ENCODE measurements at regions of chr3 and their contacts with region 1.

Region 1: DNA sequence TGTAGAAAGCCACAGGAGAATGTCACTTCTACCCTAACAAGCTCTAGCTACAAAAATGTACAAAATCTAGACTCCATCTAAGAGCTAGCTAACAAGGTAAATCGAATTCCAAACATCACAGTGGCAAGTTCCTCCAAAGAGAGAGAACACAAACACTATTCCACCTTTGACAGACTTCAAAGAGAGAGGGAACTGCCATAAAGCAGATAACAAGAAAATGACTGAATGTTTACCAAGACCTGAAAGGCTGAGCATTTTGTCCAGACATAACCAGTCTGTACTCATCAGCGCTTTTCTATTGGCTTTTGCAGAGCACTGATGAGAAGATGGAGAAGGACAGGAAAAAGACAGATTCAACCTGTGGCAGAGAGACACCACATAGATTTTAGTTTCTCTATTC is 1419.6 kb upstream of the ALCAM start:
- DNase-seq: peak; percentile 40 to 49
- H3K4me3 ChIP-seq: no peak overlapping the region
- H3K4me3 Mint-ChIP-seq: peak overlapping the region; percentile 66
- H3K27ac Mint-ChIP-seq: peak overlapping the region; percentile 88
- H3K4me1 ChIP-seq: peaks cover 16% of the 10 kb centered on the region
- H3K4me1 Mint-ChIP-seq: peaks cover 17% of the 10 kb centered on the region
- H3K27me3 ChIP-seq: no peaks in the 10 kb centered on the region
- H3K27me3 Mint-ChIP-seq: no peaks in the 10 kb centered on the region
- CTCF ChIP-seq: no peak

Region 2: DNA sequence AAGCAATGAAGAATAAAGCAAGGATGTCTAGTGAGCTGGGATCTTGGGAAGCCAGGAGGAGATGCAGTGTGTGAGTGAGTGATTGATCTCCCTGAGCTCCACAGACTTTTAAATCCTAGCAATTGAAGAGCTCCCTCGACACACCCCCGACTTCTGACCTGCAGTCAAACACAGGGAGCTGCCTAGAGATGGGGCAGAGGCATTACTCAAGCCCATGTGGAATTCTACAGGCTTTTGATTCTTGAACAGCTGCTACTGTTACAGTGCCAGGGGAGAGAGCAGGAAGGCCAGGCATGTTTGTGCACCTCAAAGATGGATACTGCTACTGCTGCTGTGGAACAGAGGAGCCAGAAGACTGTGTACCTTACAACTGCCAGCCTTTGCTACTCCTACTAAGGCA is 16.5 kb after region 1 on chr3:
- CTCF ChIA-PET with region 1: no interaction called
- POLR2A ChIA-PET with region 1: no interaction called
- intact Hi-C with region 1: loop called (anchors 1 kb)
- DNase-seq: peak; percentile 9 to 46
- H3K4me3 ChIP-seq: no peak overlapping the region
- H3K4me3 Mint-ChIP-seq: peak overlapping the region; percentile 48
- H3K27ac Mint-ChIP-seq: peak overlapping the region; percentile 23
- H3K4me1 ChIP-seq: peaks cover 22% of the 10 kb centered on the region; the same call in 1 of the 2 replicates
- H3K4me1 Mint-ChIP-seq: peaks cover 21% of the 10 kb centered on the region
- H3K27me3 ChIP-seq: no peaks in the 10 kb centered on the region
- H3K27me3 Mint-ChIP-seq: no peaks in the 10 kb centered on the region
- CTCF ChIP-seq: no peak

Region 3: GRCh38 chr3:103976931-103977339 is 29.9 kb after region 1 on chr3:
- CTCF ChIA-PET with region 1: no interaction called
- POLR2A ChIA-PET with region 1: no interaction called
- intact Hi-C with region 1: loop called (anchors 1 kb)
- DNase-seq: peak in 1 of 2 experiments; percentile 18
- H3K4me3 ChIP-seq: no peak overlapping the region
- H3K4me3 Mint-ChIP-seq: peak overlapping the region; percentile 33
- H3K27ac Mint-ChIP-seq: peak overlapping the region; percentile 75
- H3K4me1 ChIP-seq: peaks cover 26% of the 10 kb centered on the region
- H3K4me1 Mint-ChIP-seq: peaks cover 15% of the 10 kb centered on the region
- H3K27me3 ChIP-seq: no peaks in the 10 kb centered on the region
- H3K27me3 Mint-ChIP-seq: no peaks in the 10 kb centered on the region
- CTCF ChIP-seq: no peak

Region 4: GRCh38 chr3:104088738-104089137 is 141.7 kb after region 1 on chr3:
- CTCF ChIA-PET with region 1: no interaction called
- POLR2A ChIA-PET with region 1: no interaction called
- intact Hi-C with region 1: loop called (anchors 2 kb)
- DNase-seq: no peak
- H3K4me3 ChIP-seq: no peak overlapping the region
- H3K4me3 Mint-ChIP-seq: no peak overlapping the region
- H3K27ac Mint-ChIP-seq: no peak overlapping the region
- H3K4me1 ChIP-seq: peaks cover 26% of the 10 kb centered on the region
- H3K4me1 Mint-ChIP-seq: peaks cover 10% of the 10 kb centered on the region
- H3K27me3 ChIP-seq: no peaks in the 10 kb centered on the region
- H3K27me3 Mint-ChIP-seq: no peaks in the 10 kb centered on the region
- CTCF ChIP-seq: no peak

Measured in Caco-2 (cell line).